ENCODE measurements at regions of chr11 and their contacts with region 1.

Region 1: DNA sequence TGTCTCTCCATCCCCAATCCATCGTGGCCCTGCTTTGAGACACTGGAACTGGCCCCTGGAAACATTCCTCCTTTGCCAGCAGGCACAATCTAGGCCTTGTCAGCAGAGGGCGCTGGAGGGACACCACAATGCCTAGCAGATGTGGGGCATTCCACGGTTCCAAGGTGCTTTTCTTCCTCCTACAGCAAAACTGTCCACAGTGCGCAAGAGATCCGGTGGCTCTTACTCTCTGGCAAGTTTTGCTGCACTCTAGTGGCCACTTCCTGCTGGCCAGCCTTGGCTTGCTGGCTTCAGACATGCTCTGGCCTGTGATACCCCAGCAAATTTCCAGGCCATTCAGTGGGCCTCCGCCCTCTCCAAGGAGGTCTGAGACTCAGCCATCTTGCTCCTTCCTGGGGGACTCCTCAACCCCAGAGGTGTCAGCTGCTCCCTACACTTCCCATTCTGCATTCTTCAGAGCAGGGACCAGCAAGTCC is 17.1 kb upstream of the RBM4B start:
- DNase-seq: peak; percentile 84 to 90 (median 85)
- H3K4me3 ChIP-seq: no peak overlapping the region
- H3K27ac ChIP-seq: no peak overlapping the region
- H3K4me1 ChIP-seq: no peaks in the 10 kb centered on the region
- H3K27me3 ChIP-seq: no peaks in the 10 kb centered on the region
- CTCF ChIP-seq: peak; percentile 84 to 89 (median 86)
- EP300 ChIP-seq: no peak
- POLR2A ChIP-seq: no peak

Region 2: DNA sequence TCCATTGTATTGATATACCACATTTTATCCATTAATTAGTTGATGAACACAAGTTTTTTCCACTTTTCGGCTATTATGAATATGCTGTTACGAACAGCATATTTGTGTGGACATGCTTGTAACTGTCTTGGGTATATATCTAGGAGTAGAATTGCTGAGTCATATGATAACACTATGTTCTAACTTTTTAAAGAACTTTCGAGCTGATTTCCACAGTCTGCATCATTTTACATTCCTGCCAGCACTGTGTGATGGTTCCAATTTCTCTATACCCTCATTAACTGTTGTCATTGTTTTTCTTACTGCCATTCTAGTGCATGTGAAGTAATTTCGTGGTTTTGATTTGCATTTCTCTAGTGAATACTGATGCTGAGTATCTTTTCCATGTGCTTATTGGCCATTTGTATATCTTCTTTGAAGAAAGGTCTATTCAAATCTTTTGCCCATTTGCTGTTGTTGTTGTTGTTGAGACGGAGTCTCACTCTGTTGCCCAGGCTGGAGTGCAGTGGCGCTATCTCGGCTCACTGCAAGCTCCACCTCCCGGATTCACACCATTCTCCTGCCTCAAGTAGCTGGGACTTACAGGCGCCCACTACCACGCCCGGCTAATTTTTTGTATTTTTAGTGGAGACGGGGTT is 141.1 kb after region 1 on chr11:
- intact Hi-C with region 1: loop called (anchors 2 to 5 kb)
- DNase-seq: no peak
- H3K4me3 ChIP-seq: no peak overlapping the region
- H3K27ac ChIP-seq: no peak overlapping the region
- H3K4me1 ChIP-seq: no peaks in the 10 kb centered on the region
- H3K27me3 ChIP-seq: no peaks in the 10 kb centered on the region
- CTCF ChIP-seq: no peak
- EP300 ChIP-seq: no peak
- POLR2A ChIP-seq: no peak